T-cell (primary cell): ENCODE measurements at regions of chr2 and their contacts with region 1.

Region 1: GRCh38 chr2:137838255-137839092 is 125.8 kb upstream of the HNMT start:
- DNase-seq: peak in 2 of 35 experiments; percentile 5 to 49
- ATAC-seq: peak in 1 of 4 experiments; percentile 48
- H3K4me3 ChIP-seq: no peak overlapping the region
- H3K4me3 Mint-ChIP-seq: no peak overlapping the region
- H3K27ac ChIP-seq: no peak overlapping the region
- H3K27ac Mint-ChIP-seq: no peak overlapping the region
- H3K4me1 ChIP-seq: no peaks in the 10 kb centered on the region
- H3K4me1 Mint-ChIP-seq: no peaks in the 10 kb centered on the region
- H3K27me3 ChIP-seq: peaks cover 0 to 7% of the 10 kb centered on the region in 2 experiments
- H3K27me3 Mint-ChIP-seq: peaks cover 4% of the 10 kb centered on the region in 2 donors

Region 2: DNA sequence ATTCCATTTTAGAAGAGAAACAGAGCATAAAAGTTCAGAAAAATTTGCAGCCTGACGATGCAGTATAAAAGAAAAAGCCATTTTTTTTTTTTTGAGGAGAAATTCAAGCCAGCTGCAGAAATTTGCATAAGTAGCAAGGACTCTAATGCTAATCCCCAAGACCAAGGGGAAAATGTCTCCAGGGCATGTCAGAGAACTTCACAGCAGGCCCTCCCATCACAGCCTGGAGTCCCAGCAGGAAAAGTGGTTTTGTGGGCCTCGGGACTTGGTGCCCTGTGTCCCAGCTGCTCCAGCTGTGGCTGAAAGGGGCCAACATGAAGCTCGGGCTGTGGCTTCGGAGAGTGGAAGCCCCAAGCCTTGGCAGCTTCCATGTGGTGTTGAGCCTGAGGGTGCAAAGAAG is 199.5 kb before region 1 on chr2:
- CTCF ChIA-PET with region 1: interaction called in 1 of 2 experiments, 11 read pairs
- POLR2A ChIA-PET with region 1: no interaction called
- DNase-seq: no peak
- ATAC-seq: no peak
- H3K4me3 ChIP-seq: no peak overlapping the region
- H3K4me3 Mint-ChIP-seq: no peak overlapping the region
- H3K27ac ChIP-seq: no peak overlapping the region
- H3K27ac Mint-ChIP-seq: no peak overlapping the region
- H3K4me1 ChIP-seq: no peaks in the 10 kb centered on the region
- H3K4me1 Mint-ChIP-seq: no peaks in the 10 kb centered on the region
- H3K27me3 ChIP-seq: no peaks in the 10 kb centered on the region
- H3K27me3 Mint-ChIP-seq: no peaks in the 10 kb centered on the region